ENCODE measurements at regions of chr19 and their contacts with region 1.

Region 1: DNA sequence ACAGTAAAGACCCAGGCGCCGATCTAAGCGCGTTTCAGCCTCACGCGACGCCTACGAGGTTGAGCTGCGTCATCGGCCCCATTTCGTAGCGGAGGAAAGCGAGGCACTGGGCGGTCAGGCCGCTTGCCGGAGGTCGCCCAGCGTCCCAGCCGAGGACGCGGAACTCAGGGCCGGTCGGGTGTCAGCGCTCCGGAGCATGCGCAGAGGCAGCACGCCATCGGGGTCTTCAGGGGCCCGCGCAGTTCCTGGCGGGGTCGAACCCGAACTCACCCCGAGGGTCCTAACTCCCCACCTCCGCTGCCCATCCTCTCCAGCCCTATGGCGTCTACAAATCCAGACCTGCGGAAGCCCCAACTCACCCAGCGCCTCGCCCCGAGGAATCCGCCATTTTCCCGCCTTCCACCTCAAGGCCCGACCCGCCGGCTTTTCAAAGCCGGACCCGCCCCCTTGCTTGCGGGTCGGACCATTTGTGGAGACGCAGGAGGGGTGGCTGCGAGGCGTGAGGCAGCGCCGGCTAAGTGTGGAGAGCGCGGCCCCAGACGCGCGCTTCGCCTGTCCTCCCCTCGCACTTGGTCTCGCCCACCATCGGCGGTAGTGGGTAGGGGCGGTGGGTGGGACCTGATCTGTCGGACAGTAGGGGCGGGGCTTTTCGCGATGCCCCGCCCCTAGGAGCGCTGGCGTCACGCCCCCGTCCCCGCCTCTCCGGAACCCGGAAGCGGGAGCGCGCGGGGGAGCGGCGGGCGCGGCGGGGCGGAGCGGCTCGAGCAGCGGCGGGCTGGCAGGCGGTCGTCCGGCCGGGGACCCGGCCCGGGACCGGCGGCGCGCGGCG is at the starts of genes HAUS8 and MYO9B:
- DNase-seq: peak; percentile 99
- ATAC-seq: peak; percentile 79
- H3K4me3 ChIP-seq: peak within 1 kb of the TSS; percentile 91
- H3K27ac ChIP-seq: peak within 1 kb of the TSS; percentile 49
- H3K4me1 ChIP-seq: peaks cover 32% of the 10 kb centered on the region
- H3K27me3 ChIP-seq: no peaks in the 10 kb centered on the region
- CTCF ChIP-seq: no peak
- total RNA-seq, gene HAUS8: 19.1 and 21.3 TPM in 2 replicates
- total RNA-seq, gene MYO9B: 68.3 and 76.1 TPM in 2 replicates

Region 2: DNA sequence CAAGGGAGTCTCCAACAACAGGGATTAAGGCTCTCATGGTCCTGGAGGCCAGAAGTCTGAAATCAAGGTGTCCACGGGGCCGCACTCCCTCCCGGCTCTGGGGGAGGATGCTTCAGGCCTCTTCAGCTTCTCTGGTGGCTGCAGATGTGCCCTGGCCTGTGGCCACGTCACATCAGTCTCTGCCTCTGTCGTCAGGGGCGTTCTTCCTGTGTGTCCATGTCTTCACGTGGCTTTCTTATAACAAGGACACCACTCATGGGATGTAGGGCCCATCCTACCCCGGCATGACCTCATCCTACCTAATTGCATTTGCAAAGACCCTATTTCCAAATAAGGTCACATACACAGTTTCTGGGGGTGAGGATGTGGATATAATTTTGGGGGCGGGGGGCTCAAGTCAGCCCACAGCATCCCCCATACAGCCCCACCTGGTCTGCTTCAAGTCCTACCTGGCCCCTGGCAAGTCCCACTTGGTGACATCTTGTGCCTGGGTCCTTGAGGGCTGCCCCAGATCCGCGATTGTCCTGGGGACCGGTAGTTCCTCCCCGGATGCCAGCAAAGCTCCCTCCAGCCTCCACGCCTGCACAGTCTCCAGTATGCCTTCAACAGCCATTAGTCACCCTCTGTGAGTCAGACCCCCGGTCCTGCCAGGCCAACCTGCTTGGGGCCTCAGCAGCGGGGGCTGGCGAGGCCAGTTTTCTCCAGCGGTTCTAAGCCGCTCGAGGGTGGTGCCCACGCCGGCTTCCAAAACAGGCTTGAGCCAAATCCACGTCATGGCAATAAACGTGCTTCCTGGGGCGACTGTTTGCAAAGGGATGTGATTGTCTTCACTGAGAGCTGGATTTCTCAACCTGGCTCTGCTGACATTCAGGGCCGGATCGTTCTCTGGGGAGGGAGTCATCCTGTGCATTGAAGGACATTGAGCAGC is 32.5 kb after region 1 on chr19:
- CTCF ChIA-PET with region 1: no interaction called
- POLR2A ChIA-PET with region 1: no interaction called
- intact Hi-C with region 1: loop called (anchors 1 kb)
- DNase-seq: peak; percentile 99
- ATAC-seq: peak; percentile 98
- H3K4me3 ChIP-seq: peak overlapping the region; percentile 15; the same call in 1 of the 2 replicates
- H3K27ac ChIP-seq: peak overlapping the region; percentile 91
- H3K4me1 ChIP-seq: peaks cover 16% of the 10 kb centered on the region
- H3K27me3 ChIP-seq: no peaks in the 10 kb centered on the region
- CTCF ChIP-seq: no peak

Region 3: GRCh38 chr19:17135001-17135853 is 60.0 kb after region 1 on chr19:
- CTCF ChIA-PET with region 1: no interaction called
- POLR2A ChIA-PET with region 1: interaction called, 20 read pairs
- intact Hi-C with region 1: loop called (anchors 1 kb)
- DNase-seq: peak; percentile 92
- ATAC-seq: peak; percentile 96
- H3K4me3 ChIP-seq: peak overlapping the region; percentile 54; the same call in 1 of the 2 replicates
- H3K27ac ChIP-seq: peak overlapping the region; percentile 78
- H3K4me1 ChIP-seq: peaks cover 25% of the 10 kb centered on the region
- H3K27me3 ChIP-seq: no peaks in the 10 kb centered on the region
- CTCF ChIP-seq: no peak; the same call in 1 of the 2 replicates

Region 4: GRCh38 chr19:17322854-17323253 is 247.6 kb after region 1 on chr19:
- CTCF ChIA-PET with region 1: no interaction called
- POLR2A ChIA-PET with region 1: interaction called, 18 read pairs
- intact Hi-C with region 1: no loop called
- DNase-seq: no peak
- ATAC-seq: peak; percentile 16
- H3K4me3 ChIP-seq: no peak overlapping the region
- H3K27ac ChIP-seq: no peak overlapping the region
- H3K4me1 ChIP-seq: peaks cover 1% of the 10 kb centered on the region
- H3K27me3 ChIP-seq: no peaks in the 10 kb centered on the region
- CTCF ChIP-seq: no peak

Region 5: DNA sequence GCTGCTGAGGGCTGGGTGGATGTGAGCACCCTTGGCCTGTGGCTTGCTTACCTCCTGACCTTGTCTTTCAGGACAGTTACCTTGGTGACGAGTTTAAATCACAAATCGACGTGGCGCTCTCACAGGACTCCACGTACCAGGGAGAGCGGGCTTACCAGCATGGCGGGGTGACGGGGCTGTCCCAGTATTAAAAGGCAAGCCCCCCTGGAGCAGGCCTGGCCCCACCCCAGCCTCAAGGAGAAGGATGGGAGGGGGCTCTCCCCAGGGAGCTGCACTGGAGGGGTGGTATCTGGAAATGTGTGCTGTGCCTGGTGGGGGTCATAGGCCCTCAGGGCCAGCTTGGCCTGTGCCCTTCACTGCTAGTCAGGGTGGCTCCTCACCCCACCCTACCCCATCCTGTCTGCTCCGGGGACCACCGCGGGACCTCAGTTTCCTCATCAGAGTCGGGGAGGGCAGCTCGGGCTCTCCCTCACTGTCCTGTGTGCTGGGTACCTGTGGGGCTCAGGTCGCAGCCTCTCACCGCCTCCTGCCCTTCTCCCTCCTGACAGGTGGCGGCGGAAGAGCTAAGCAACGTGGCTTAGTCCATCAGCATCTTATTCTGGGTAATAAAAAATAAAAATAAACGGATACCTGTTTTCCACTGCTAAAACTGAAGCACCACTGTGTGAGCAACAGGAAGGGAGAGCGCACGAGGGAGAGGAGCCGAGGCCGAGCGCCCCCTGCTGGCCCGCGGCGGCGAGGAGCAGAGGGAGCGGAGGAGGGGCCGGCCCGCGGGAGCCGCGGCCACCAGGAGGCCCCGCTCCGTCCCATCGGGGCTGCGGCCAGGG is 1790.9 kb after region 1 on chr19:
- CTCF ChIA-PET with region 1: no interaction called
- POLR2A ChIA-PET with region 1: no interaction called
- intact Hi-C with region 1: no loop called
- DNase-seq: peak; percentile 77
- ATAC-seq: peak; percentile 96
- H3K4me3 ChIP-seq: no peak overlapping the region
- H3K27ac ChIP-seq: no peak overlapping the region
- H3K4me1 ChIP-seq: no peaks in the 10 kb centered on the region
- H3K27me3 ChIP-seq: no peaks in the 10 kb centered on the region
- CTCF ChIP-seq: peak; percentile 99